ENCODE measurements at regions of chr12 and their contacts with region 1.

Region 1: GRCh38 chr12:31859232-31859977 is 99.8 kb upstream of the RESF1 start:
- H3K4me3 Mint-ChIP-seq: no peak overlapping the region
- H3K27ac Mint-ChIP-seq: no peak overlapping the region
- H3K4me1 Mint-ChIP-seq: no peaks in the 10 kb centered on the region
- H3K27me3 Mint-ChIP-seq: no peaks in the 10 kb centered on the region

Region 2: DNA sequence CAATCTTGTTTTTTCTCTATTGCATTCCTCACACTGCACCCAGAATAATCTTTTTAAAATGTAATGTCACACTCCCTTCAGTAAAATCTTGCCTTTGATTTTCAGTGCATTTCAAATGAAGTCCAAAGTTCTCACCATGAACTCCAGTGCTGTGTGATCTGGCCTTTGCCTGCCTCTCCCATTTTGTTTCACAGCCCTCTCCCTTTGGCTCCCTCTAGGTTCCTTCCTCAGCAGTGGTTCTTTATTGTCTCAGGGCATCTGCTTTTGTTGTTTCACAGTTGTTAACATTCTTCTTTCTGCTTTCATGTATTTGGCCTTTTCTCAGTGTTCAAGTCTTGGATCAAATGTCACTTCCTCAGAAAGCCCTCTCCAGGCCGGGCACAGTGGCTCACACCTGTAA is 46.1 kb before region 1 on chr12:
- intact Hi-C with region 1: no loop called
- H3K4me3 Mint-ChIP-seq: no peak overlapping the region
- H3K27ac Mint-ChIP-seq: peak overlapping the region; percentile 7
- H3K4me1 Mint-ChIP-seq: peaks cover 25% of the 10 kb centered on the region
- H3K27me3 Mint-ChIP-seq: peaks cover 3% of the 10 kb centered on the region

Region 3: DNA sequence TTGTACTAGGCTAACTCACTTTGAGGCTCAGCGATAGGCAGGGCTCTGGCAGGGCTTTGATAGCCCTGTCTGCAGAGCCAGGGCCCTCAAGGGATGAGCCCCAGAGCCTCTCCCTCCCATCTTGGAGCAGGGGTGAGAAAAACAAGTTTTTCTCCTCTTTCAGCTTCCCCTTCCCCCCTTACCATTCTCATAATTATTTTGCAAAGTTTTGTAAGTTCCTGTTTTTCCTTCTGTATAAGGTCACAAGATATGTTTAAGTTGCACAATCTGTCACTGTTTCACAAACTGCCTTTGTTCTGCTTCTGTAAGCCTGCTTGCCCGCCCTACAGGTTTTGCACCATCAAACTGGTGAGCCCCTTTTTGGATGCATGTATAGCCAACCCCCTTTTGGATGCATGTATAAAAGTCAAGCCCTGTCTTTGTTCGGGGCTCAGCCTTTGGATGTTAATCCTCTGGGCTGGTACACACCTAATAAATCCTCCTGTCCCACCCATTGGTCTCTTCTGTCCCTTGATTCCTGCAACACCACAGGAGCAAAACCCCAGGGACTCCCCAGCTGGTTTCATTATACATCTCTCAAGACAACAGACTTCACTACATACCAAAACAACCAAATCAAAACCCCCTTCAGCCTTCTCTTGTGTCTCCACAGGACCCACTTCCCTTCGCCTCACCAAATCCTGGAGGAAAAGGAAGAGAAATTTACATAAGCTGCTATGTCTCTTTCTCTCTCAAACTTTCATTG is 47.3 kb after region 1 on chr12:
- intact Hi-C with region 1: loop called (anchors 10 kb)
- H3K4me3 Mint-ChIP-seq: peak overlapping the region; percentile 42
- H3K27ac Mint-ChIP-seq: peak overlapping the region; percentile 99
- H3K4me1 Mint-ChIP-seq: peaks cover 39% of the 10 kb centered on the region
- H3K27me3 Mint-ChIP-seq: no peaks in the 10 kb centered on the region